ENCODE measurements at regions of chr9 and their contacts with region 1.

Region 1: GRCh38 chr9:137551651-137552384 is at the start of gene MRPL41:
- DNase-seq: peak; percentile 76 to 96 (median 88)
- H3K4me3 ChIP-seq: peak within 1 kb of the TSS; percentile 62 to 92 (median 81)
- H3K27ac ChIP-seq: peak within 1 kb of the TSS; percentile 52 to 96 (median 91)
- H3K27me3 ChIP-seq: no peaks in the 10 kb centered on the region
- CTCF ChIP-seq: peak in 5 of 56 donors; percentile 2 to 32 (median 5)
- total RNA-seq, gene MRPL41: 66.9 to 190 (median 109) TPM

Region 2: GRCh38 chr9:137150617-137151457 is 401.0 kb before region 1 on chr9:
- intact Hi-C with region 1: no loop called
- DNase-seq: no peak
- H3K4me3 ChIP-seq: no peak overlapping the region
- H3K27ac ChIP-seq: no peak overlapping the region
- H3K27me3 ChIP-seq: peaks cover 0 to 31% (median 1%) of the 10 kb centered on the region in 45 donors
- CTCF ChIP-seq: no peak

Region 3: DNA sequence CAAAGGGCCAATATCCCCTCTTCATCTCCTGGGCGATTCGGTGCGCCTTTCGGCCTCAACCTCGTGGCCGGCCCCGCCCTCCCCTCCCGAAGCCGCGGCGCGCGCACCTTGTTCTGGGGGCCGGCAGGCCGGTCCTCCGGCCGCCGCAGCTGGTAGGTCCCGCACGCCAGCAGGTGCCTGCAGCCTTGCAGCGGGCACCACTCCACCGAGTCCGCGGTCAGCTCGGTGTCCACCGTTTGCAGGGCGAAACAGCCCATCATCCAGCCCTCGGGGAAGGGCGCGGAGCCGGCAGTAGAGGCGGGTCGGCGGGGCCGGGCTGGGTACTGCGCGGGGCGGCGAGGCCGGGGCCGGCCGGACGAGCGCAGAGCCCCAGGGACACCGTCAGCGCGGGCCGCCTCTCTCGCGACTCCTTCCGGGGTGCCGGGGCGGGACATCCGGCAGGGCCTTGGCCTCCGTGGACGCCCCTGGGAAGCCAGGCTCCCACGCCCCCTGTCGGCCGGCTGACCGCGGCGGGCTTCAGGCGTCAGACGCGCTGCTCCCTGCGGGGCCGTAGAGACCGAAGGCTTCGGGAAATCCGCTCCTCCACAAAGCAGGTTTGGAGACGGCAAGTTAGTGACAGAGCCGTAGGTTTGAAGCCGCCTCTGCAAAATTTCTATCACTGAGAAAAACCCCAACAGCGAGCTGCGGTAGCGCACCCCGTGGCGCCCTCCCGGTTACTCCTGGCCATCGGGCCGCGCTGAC is 26.9 kb after region 1 on chr9 and contains the start of gene DPH7:
- intact Hi-C with region 1: loop called in 1 of 2 experiments (anchors 1 kb)
- DNase-seq: peak; percentile 92 to 99 (median 96)
- H3K4me3 ChIP-seq: peak within 1 kb of the TSS; percentile 60 to 100 (median 92)
- H3K27ac ChIP-seq: peak within 1 kb of the TSS in 55 of 59 donors; percentile 0 to 91 (median 74)
- H3K27me3 ChIP-seq: no peaks in the 10 kb centered on the region
- CTCF ChIP-seq: peak in 55 of 56 donors; percentile 85 to 100 (median 97)
- total RNA-seq, gene DPH7: 29.0 to 72.8 (median 45.7) TPM

Region 4: DNA sequence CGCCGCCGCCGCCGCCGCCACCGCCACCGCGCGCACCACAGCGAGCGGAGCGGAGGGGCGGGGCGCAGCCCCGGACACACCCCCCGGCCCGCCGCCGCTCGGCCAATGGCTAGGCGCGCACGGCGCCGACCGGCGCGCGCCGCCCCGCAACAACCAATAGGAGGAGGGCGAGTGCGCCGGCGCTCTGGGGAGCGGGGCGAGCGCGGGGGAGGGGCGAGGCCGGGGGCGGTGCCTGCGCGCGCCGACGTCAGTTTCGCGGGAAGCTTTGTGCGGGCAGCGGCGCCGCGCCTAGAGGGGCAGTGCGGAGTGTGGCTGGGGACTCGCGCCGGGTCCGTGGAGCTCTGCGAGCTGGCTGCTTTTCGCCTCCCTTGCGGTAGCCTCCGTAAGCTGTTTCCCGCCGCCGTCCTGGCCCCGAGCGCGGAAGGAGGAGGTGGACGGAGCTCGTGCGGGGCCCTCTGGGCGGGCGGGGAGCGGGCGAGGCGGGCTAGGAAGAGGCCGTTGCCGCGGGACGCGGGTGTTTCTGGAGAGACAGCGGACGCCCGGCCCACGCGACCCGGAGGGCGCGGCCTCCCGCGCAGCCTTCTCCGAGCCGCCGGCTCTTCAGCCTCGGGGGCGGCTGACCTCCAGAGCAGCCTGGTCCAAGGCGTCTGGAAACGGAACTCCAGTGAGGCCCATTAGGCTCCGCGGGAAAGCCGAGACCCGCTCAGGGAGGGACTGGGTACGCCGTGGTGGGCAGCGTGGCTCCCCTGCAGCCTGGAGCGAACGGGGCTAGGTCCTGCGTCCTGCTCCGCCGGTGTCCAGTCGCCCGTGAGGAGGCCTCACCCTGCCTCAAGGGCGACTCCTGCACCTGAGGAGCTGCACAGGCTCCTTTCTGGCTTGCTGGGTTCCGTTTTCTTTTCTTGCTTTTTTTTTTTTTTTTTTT is 38.9 kb after region 1 on chr9 and contains the start of gene ZMYND19:
- intact Hi-C with region 1: loop called (anchors 5 kb)
- DNase-seq: peak; percentile 55 to 89 (median 79)
- H3K4me3 ChIP-seq: peak within 1 kb of the TSS; percentile 59 to 97 (median 86)
- H3K27ac ChIP-seq: peak within 1 kb of the TSS in 22 of 59 donors; percentile 9 to 72 (median 48)
- H3K27me3 ChIP-seq: no peaks in the 10 kb centered on the region
- CTCF ChIP-seq: peak in 21 of 56 donors; percentile 6 to 37 (median 17)
- total RNA-seq, gene ZMYND19: 13.5 to 30.5 (median 23.8) TPM

Region 5: DNA sequence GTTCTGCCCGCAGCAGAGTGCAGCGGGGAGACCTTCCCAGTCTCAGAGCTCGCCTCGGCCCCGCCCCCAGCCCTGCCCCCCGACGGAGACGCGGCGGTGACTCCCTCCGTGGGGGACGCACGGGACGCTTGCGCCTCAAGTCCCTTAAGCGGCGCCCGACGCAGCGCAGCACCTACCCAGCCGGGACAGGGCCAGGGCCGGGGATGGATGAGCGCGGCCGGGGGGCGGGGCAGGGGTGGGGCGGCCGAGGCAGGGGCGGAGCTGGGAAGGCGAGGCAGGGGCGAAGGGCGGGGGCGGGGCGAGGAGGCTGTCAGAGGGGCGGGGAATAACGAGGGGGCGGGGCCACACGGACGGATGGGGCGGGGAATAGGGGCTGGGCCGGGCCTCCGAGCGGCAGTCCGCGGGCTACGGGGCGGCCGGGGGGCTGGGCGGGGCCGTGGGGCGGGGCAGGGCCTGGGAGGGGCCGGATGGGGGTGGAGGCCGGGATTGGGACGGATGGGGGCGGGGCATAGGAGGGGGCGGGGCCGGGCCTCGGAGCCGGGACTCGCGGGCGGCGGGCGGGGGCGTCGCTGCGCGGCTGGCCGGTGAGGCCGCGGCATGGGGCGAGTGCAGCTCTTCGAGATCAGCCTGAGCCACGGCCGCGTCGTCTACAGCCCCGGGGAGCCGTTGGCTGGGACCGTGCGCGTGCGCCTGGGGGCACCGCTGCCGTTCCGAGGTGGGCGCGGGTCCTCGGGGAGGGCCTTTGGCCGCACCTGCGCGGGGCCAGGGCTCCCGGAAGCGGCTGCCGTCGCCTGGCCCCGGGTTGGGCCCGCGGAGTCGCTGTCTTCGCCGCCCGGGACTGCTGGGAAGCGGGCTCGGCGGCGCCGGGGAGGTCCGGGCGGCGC is 53.5 kb after region 1 on chr9 and contains the start of gene ARRDC1:
- intact Hi-C with region 1: loop called in 1 of 2 experiments (anchors 5 kb)
- DNase-seq: peak; percentile 75 to 93 (median 85)
- H3K4me3 ChIP-seq: peak within 1 kb of the TSS; percentile 55 to 94 (median 76)
- H3K27ac ChIP-seq: peak within 1 kb of the TSS in 49 of 59 donors; percentile 41 to 90 (median 74)
- H3K27me3 ChIP-seq: no peaks in the 10 kb centered on the region
- CTCF ChIP-seq: peak in 2 of 56 donors; percentile 25 to 30
- total RNA-seq, gene ARRDC1: 14.9 to 48.4 (median 31.8) TPM

Region 6: GRCh38 chr9:137694967-137695879 is 143.4 kb after region 1 on chr9:
- intact Hi-C with region 1: loop called in 1 of 2 experiments (anchors 10 kb)
- DNase-seq: peak in 9 of 10 donors; percentile 41 to 80 (median 68)
- H3K4me3 ChIP-seq: peak overlapping the region in 2 of 59 donors; percentile 18 to 26
- H3K27ac ChIP-seq: peak overlapping the region in 45 of 59 donors; percentile 1 to 81 (median 63)
- H3K27me3 ChIP-seq: no peaks in the 10 kb centered on the region
- CTCF ChIP-seq: peak; percentile 22 to 90 (median 76)